ENCODE measurements at regions of chr11 and their contacts with region 1.

Region 1: GRCh38 chr11:83156150-83156995 is 558 bp upstream of the PCF11 start:
- DNase-seq: peak; percentile 94 to 100 (median 97)
- ATAC-seq: peak; percentile 83
- H3K4me3 ChIP-seq: peak overlapping the region; percentile 89 to 98
- H3K4me3 Mint-ChIP-seq: peak overlapping the region; percentile 100
- H3K27ac ChIP-seq: peak overlapping the region; percentile 97
- H3K27ac Mint-ChIP-seq: peak overlapping the region; percentile 100
- H3K4me1 ChIP-seq: peaks cover 13% of the 10 kb centered on the region
- H3K4me1 Mint-ChIP-seq: peaks cover 28% of the 10 kb centered on the region
- H3K27me3 ChIP-seq: no peaks in the 10 kb centered on the region
- H3K27me3 Mint-ChIP-seq: no peaks in the 10 kb centered on the region
- CTCF ChIP-seq: no peak

Region 2: DNA sequence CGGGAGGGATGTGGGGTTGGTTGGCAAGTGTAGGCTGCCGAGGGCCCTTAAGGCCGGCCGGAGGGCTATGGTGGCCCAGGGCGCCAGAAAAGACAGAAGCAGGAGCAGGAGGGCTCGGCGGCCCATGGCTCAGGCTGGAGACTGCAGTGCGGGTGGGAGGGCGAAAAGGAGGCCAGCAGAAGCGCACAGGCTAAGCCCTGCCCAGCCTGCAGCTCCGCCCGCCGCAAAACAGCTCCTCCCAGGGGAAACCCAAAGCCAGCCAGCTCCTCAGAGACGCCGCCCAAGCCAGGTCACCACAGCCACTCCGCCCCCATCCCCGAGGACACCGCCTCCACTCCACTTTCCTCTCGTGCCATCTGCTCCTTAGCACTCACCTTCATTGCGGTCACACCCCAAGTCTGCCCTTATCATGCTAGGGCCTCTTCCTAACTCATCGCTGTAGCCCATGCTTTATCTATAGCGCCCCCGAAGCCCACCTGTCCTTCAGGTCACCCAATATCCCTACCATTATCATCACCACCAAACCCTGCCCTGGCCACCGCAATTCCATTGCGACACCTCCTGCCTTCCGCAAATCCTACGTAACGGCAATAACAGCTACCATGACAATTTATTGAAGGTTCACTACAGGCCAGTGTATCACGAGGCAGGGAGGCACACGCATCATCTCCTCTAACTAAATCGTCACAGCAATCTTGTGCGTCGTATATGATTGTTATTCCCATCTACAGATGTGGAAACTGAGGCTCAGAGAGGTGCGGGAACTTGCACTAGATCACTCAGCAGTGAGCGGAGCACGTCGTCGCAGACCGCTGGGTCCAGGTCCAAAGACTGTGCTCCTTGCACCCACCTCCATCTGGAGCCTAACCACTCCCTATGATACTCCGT is 255.9 kb before region 1 on chr11 and contains the start of gene PRCP:
- CTCF ChIA-PET with region 1: interaction called, 8 read pairs
- POLR2A ChIA-PET with region 1: interaction called, 42 read pairs
- intact Hi-C with region 1: loop called (anchors 1 kb)
- DNase-seq: peak; percentile 84 to 96 (median 92)
- ATAC-seq: peak; percentile 69
- H3K4me3 ChIP-seq: peak within 1 kb of the TSS; percentile 76 to 93
- H3K4me3 Mint-ChIP-seq: peak within 1 kb of the TSS; percentile 99
- H3K27ac ChIP-seq: peak within 1 kb of the TSS; percentile 94 to 96
- H3K27ac Mint-ChIP-seq: peak within 1 kb of the TSS; percentile 100
- H3K4me1 ChIP-seq: peaks cover 26% of the 10 kb centered on the region
- H3K4me1 Mint-ChIP-seq: peaks cover 48% of the 10 kb centered on the region
- H3K27me3 ChIP-seq: no peaks in the 10 kb centered on the region
- H3K27me3 Mint-ChIP-seq: no peaks in the 10 kb centered on the region
- CTCF ChIP-seq: no peak
- total RNA-seq, gene PRCP: 23.9 to 27.8 TPM

Region 3: DNA sequence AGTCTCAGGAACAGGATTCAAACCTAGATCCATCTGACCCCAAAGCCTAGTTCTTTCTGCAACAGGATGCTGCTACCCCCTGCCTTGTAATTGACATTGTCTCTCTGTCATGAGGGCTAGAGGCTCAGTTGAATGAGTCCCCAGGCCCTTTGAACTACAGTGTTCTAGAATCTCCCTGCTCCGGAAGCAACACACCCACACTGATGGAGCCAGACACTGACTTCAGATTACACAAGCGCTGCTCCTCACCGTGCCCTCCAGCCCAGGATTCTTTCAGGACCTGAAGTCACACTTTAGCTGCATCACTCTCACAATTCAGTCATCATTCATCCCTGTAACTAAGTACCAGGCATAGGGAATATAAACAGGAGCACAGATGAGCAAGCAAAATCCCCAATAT is 154.3 kb before region 1 on chr11:
- CTCF ChIA-PET with region 1: no interaction called
- POLR2A ChIA-PET with region 1: no interaction called
- intact Hi-C with region 1: no loop called
- DNase-seq: peak in 4 of 9 experiments; percentile 30 to 61 (median 44)
- ATAC-seq: peak; percentile 90
- H3K4me3 ChIP-seq: no peak overlapping the region
- H3K4me3 Mint-ChIP-seq: peak overlapping the region; percentile 40
- H3K27ac ChIP-seq: no peak overlapping the region
- H3K27ac Mint-ChIP-seq: peak overlapping the region; percentile 75
- H3K4me1 ChIP-seq: peaks cover 36% of the 10 kb centered on the region
- H3K4me1 Mint-ChIP-seq: peaks cover 52% of the 10 kb centered on the region
- H3K27me3 ChIP-seq: no peaks in the 10 kb centered on the region
- H3K27me3 Mint-ChIP-seq: no peaks in the 10 kb centered on the region
- CTCF ChIP-seq: no peak

Region 4: GRCh38 chr11:83063073-83063754 is 93.2 kb before region 1 on chr11:
- CTCF ChIA-PET with region 1: no interaction called
- POLR2A ChIA-PET with region 1: interaction called, 54 read pairs
- intact Hi-C with region 1: no loop called
- DNase-seq: peak in 3 of 9 experiments; percentile 16 to 64 (median 45)
- ATAC-seq: peak; percentile 87
- H3K4me3 ChIP-seq: peak overlapping the region; percentile 29 to 37
- H3K4me3 Mint-ChIP-seq: peak overlapping the region; percentile 84
- H3K27ac ChIP-seq: peak overlapping the region; percentile 54 to 67
- H3K27ac Mint-ChIP-seq: peak overlapping the region; percentile 94
- H3K4me1 ChIP-seq: peaks cover 11% of the 10 kb centered on the region
- H3K4me1 Mint-ChIP-seq: peaks cover 61% of the 10 kb centered on the region
- H3K27me3 ChIP-seq: no peaks in the 10 kb centered on the region
- H3K27me3 Mint-ChIP-seq: no peaks in the 10 kb centered on the region
- CTCF ChIP-seq: no peak

Region 5: DNA sequence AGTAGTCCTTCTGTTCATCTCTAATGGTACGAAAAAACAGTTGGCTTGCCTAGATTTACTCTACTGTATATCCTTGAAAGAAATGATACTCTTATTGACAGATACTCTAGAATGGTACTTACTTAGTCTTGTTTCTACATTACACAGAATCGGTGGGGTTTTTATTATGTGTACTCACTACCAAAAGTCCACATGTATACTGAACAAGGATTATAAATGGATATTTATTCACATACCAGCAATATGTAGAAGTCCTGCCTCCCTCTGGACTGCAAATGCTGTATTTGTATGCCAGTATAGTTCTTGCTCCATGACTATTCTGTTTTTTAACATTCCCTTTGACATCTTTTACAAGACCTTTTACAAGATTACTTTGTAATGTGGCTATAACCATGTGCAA is 14.5 kb after region 1 on chr11:
- CTCF ChIA-PET with region 1: interaction called, 4 read pairs
- POLR2A ChIA-PET with region 1: interaction called, 19 read pairs
- intact Hi-C with region 1: loop called in 1 of 2 experiments (anchors 2 kb)
- DNase-seq: no peak
- ATAC-seq: no peak
- H3K4me3 ChIP-seq: peak overlapping the region; percentile 21
- H3K4me3 Mint-ChIP-seq: peak overlapping the region; percentile 78
- H3K27ac ChIP-seq: peak overlapping the region in 1 of 2 experiments; percentile 17
- H3K27ac Mint-ChIP-seq: peak overlapping the region; percentile 15
- H3K4me1 ChIP-seq: peaks cover 72% of the 10 kb centered on the region
- H3K4me1 Mint-ChIP-seq: peaks cover 86% of the 10 kb centered on the region
- H3K27me3 ChIP-seq: no peaks in the 10 kb centered on the region
- H3K27me3 Mint-ChIP-seq: no peaks in the 10 kb centered on the region
- CTCF ChIP-seq: no peak

Region 6: GRCh38 chr11:83265331-83265730 is 109.0 kb after region 1 on chr11:
- CTCF ChIA-PET with region 1: no interaction called
- POLR2A ChIA-PET with region 1: no interaction called
- intact Hi-C with region 1: no loop called
- DNase-seq: no peak
- ATAC-seq: no peak
- H3K4me3 ChIP-seq: no peak overlapping the region
- H3K4me3 Mint-ChIP-seq: no peak overlapping the region
- H3K27ac ChIP-seq: no peak overlapping the region
- H3K27ac Mint-ChIP-seq: no peak overlapping the region
- H3K4me1 ChIP-seq: no peaks in the 10 kb centered on the region
- H3K4me1 Mint-ChIP-seq: peaks cover 18% of the 10 kb centered on the region
- H3K27me3 ChIP-seq: no peaks in the 10 kb centered on the region
- H3K27me3 Mint-ChIP-seq: no peaks in the 10 kb centered on the region
- CTCF ChIP-seq: no peak

Region 7: DNA sequence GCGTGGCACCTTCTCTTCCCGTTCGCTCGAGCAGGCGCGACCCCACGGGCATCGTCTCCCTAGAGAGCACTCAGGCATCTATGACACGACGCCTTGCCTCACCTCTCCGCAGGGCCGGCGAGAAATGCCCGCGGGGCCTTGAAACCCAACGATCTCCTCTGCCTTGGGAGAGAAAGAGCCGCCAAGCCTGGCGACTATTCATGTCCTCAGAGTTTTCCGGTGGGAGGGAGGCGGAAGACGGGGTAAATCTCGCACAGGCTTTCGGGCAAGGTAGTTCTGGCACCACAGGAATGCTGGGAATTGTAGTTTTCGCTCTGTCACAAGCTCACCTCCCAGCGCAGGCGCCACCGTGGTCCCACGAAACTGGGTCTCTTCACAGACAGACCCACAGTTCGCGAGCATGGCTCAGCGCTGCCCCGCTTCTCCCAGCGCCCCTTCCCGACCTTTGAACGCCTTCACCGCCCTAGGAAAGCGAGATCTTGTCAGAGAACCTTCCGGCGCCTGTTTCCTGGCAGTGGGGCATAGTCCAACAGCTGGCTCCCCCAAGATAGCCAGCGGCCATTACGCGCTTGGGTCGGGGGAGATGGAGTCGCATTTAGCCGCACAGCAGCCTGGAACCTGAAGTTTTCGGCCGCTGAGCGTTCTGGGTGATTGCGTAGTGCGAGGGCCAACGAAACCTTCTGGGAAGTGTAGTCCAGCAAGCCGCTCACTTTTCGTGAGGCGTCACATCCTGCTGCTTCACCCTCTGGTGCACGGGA is 129.6 kb after region 1 on chr11 and contains the start of gene CCDC90B:
- CTCF ChIA-PET with region 1: no interaction called
- POLR2A ChIA-PET with region 1: interaction called, 24 read pairs
- intact Hi-C with region 1: loop called (anchors 1 to 2 kb)
- DNase-seq: peak; percentile 87 to 99 (median 94)
- ATAC-seq: peak; percentile 89
- H3K4me3 ChIP-seq: peak within 1 kb of the TSS; percentile 78 to 86
- H3K4me3 Mint-ChIP-seq: peak within 1 kb of the TSS; percentile 98
- H3K27ac ChIP-seq: peak within 1 kb of the TSS; percentile 88 to 99
- H3K27ac Mint-ChIP-seq: peak within 1 kb of the TSS; percentile 100
- H3K4me1 ChIP-seq: peaks cover 23% of the 10 kb centered on the region
- H3K4me1 Mint-ChIP-seq: peaks cover 46% of the 10 kb centered on the region
- H3K27me3 ChIP-seq: no peaks in the 10 kb centered on the region
- H3K27me3 Mint-ChIP-seq: no peaks in the 10 kb centered on the region
- CTCF ChIP-seq: no peak
- total RNA-seq, gene CCDC90B: 22.7 to 24.8 TPM

Measured in CD8-positive, alpha-beta T cell (primary cell).